Heart right ventricle (tissue), 16 donors: ENCODE measurements at regions of chr5 and their contacts with region 1.

Region 1: GRCh38 chr5:121976979-121977378 is 15.2 kb downstream of the SRFBP1 start:
- DNase-seq: no peak
- ATAC-seq: no peak
- H3K4me3 ChIP-seq: no peak overlapping the region
- H3K27ac ChIP-seq: no peak overlapping the region
- H3K4me1 ChIP-seq: peaks cover 0 to 24% (median 5%) of the 10 kb centered on the region in 9 donors
- H3K27me3 ChIP-seq: no peaks in the 10 kb centered on the region
- CTCF ChIP-seq: no peak

Region 2: GRCh38 chr5:122030251-122030650 is 53.3 kb after region 1 on chr5:
- intact Hi-C with region 1: no loop called
- DNase-seq: no peak
- ATAC-seq: no peak
- H3K4me3 ChIP-seq: no peak overlapping the region
- H3K27ac ChIP-seq: no peak overlapping the region
- H3K4me1 ChIP-seq: no peaks in the 10 kb centered on the region
- H3K27me3 ChIP-seq: no peaks in the 10 kb centered on the region
- CTCF ChIP-seq: no peak

Region 3: GRCh38 chr5:122076664-122077365 is 99.8 kb after region 1 on chr5:
- intact Hi-C with region 1: loop called in 1 of 10 experiments (anchors 10 kb)
- DNase-seq: peak; percentile 70 to 71
- ATAC-seq: peak; percentile 64 to 83 (median 78)
- H3K4me3 ChIP-seq: peak overlapping the region; percentile 26 to 66 (median 60)
- H3K27ac ChIP-seq: peak overlapping the region in 5 of 10 donors; percentile 45 to 73 (median 48)
- H3K4me1 ChIP-seq: peaks cover 0 to 35% (median 20%) of the 10 kb centered on the region in 9 donors
- H3K27me3 ChIP-seq: peaks cover 0 to 37% (median 11%) of the 10 kb centered on the region in 7 donors
- CTCF ChIP-seq: peak; percentile 12 to 78 (median 70)

Region 4: GRCh38 chr5:122816756-122817155 is 839.8 kb after region 1 on chr5:
- intact Hi-C with region 1: no loop called
- DNase-seq: no peak
- ATAC-seq: no peak
- H3K4me3 ChIP-seq: no peak overlapping the region
- H3K27ac ChIP-seq: no peak overlapping the region
- H3K4me1 ChIP-seq: no peaks in the 10 kb centered on the region
- H3K27me3 ChIP-seq: no peaks in the 10 kb centered on the region
- CTCF ChIP-seq: no peak